Heart right ventricle (tissue), 16 donors: ENCODE measurements at regions of chr12 and their contacts with region 1.

Region 1: GRCh38 chr12:80763874-80764273 is 47.2 kb downstream of the MYF5 start:
- DNase-seq: no peak
- ATAC-seq: no peak
- H3K4me3 ChIP-seq: no peak overlapping the region
- H3K27ac ChIP-seq: no peak overlapping the region
- H3K4me1 ChIP-seq: no peaks in the 10 kb centered on the region
- H3K27me3 ChIP-seq: no peaks in the 10 kb centered on the region
- CTCF ChIP-seq: peak; percentile 16 to 67 (median 58)

Region 2: DNA sequence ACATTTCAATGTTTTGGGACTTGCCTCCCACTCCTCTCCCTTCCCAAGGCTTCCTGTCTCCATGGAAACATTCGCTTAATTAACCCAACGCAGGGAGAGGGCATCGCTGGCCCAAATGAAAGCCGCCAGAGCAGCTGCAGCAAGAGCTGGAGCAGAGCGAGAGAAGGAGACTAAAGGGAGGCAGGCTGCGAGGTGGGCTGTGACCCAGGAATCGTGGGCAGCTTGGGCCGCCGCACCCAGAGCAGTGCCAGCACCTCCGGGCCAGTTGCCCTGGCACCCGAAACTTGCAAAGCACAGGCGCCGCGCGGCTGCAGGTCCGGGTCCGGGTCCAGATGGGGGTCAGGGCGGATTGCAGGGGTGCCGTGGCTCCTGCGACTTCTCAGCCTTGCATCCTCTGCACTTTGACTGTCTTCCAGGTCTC is 363.3 kb before region 1 on chr12:
- intact Hi-C with region 1: loop called in 2 of 10 experiments (anchors 5 to 10 kb)
- DNase-seq: peak in 1 of 2 donors; percentile 12
- ATAC-seq: peak in 2 of 8 donors; percentile 24 to 66
- H3K4me3 ChIP-seq: peak overlapping the region in 9 of 10 donors; percentile 26 to 49 (median 36)
- H3K27ac ChIP-seq: no peak overlapping the region
- H3K4me1 ChIP-seq: no peaks in the 10 kb centered on the region
- H3K27me3 ChIP-seq: peaks cover 0 to 17% (median 0%) of the 10 kb centered on the region in 7 donors
- CTCF ChIP-seq: no peak

Region 3: GRCh38 chr12:80412369-80412953 is 351.4 kb before region 1 on chr12:
- intact Hi-C with region 1: loop called in 9 of 10 experiments (anchors 5 to 10 kb)
- DNase-seq: peak in 1 of 2 donors; percentile 8
- ATAC-seq: peak in 2 of 8 donors; percentile 50 to 58
- H3K4me3 ChIP-seq: no peak overlapping the region
- H3K27ac ChIP-seq: no peak overlapping the region
- H3K4me1 ChIP-seq: no peaks in the 10 kb centered on the region
- H3K27me3 ChIP-seq: peaks cover 0 to 3% (median 0%) of the 10 kb centered on the region in 7 donors
- CTCF ChIP-seq: peak; percentile 56 to 84 (median 75)

Region 4: DNA sequence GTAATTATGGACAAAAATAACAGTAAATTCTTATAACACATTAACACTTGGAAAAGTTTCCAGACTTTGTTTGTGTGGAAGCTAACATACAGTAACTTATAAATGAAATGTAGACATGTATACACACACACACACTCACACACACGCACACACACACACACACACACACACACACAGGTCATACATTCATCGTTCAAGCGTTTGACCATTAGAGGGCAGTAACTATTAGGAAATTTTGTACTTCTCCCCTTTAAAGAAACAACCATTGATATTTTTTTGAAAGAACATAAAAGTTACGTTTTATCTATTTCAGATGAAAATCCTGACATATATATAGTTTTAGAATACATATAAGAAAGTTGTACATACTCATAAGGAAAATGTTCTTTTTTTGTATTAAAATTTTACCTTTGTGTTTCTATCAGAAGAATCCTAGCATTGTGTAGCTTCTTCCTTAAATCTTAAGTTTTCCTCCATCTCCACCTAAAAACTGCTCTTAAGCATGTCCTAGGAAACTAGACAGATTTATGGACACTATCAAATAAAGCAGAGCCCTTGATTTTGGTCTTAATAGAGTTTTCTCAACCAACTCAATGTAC is 290.9 kb before region 1 on chr12:
- intact Hi-C with region 1: loop called in 7 of 10 experiments (anchors 2 to 10 kb)
- DNase-seq: no peak
- ATAC-seq: no peak
- H3K4me3 ChIP-seq: no peak overlapping the region
- H3K27ac ChIP-seq: no peak overlapping the region
- H3K4me1 ChIP-seq: no peaks in the 10 kb centered on the region
- H3K27me3 ChIP-seq: no peaks in the 10 kb centered on the region
- CTCF ChIP-seq: peak in 7 of 9 donors; percentile 28 to 55 (median 38)

Region 5: DNA sequence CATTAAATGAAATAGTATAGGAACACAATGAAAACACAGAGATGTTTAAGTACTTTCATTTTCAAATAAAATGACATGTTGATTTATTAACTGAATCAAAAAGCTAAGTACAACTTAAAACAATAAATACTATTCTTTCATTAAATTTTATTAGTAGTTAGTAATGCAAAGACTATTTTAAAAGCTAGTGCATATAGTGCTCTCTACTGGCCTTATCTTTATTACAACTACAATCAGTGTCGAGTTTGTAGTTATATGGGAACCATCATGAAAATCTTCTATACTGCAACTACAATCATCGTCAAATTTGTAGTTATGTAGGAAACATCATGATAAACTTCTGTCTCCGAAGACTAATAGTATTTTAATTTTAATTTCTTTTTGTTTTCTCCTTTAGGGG is 182.7 kb after region 1 on chr12:
- intact Hi-C with region 1: loop called in 1 of 10 experiments (anchors 10 kb)
- DNase-seq: no peak
- ATAC-seq: no peak
- H3K4me3 ChIP-seq: no peak overlapping the region
- H3K27ac ChIP-seq: no peak overlapping the region
- H3K4me1 ChIP-seq: peaks cover 0 to 5% (median 0%) of the 10 kb centered on the region in 9 donors
- H3K27me3 ChIP-seq: no peaks in the 10 kb centered on the region
- CTCF ChIP-seq: peak in 6 of 9 donors; percentile 20 to 54 (median 45)